Naive thymus-derived CD4-positive, alpha-beta T cell (primary cell): ENCODE measurements at regions of chr9 and their contacts with region 1.

Region 1: GRCh38 chr9:97921959-97922724 is at the start of gene TRMO:
- DNase-seq: peak; percentile 98 to 99 (median 98)
- ATAC-seq: peak; percentile 85
- H3K4me3 ChIP-seq: peak within 1 kb of the TSS; percentile 88
- H3K4me3 Mint-ChIP-seq: peak within 1 kb of the TSS; percentile 83 to 97 (median 94)
- H3K27ac ChIP-seq: peak within 1 kb of the TSS; percentile 98
- H3K27ac Mint-ChIP-seq: peak within 1 kb of the TSS; percentile 97 to 100 (median 99)
- H3K4me1 ChIP-seq: peaks cover 36 to 38% of the 10 kb centered on the region in 2 donors
- H3K4me1 Mint-ChIP-seq: peaks cover 26 to 66% (median 47%) of the 10 kb centered on the region in 7 donors
- H3K27me3 ChIP-seq: no peaks in the 10 kb centered on the region
- H3K27me3 Mint-ChIP-seq: peaks cover 0 to 5% (median 0%) of the 10 kb centered on the region in 5 donors
- total RNA-seq, gene TRMO: 26.8 to 55.3 (median 43.8) TPM

Region 2: GRCh38 chr9:97696803-97697601 is 225.1 kb before region 1 on chr9 and contains the start of gene XPA:
- CTCF ChIA-PET with region 1: interaction called, 3 read pairs
- POLR2A ChIA-PET with region 1: interaction called, 27 read pairs
- intact Hi-C with region 1: loop called (anchors 1 kb)
- DNase-seq: peak; percentile 95 to 98 (median 96)
- ATAC-seq: peak; percentile 97
- H3K4me3 ChIP-seq: peak within 1 kb of the TSS; percentile 68
- H3K4me3 Mint-ChIP-seq: peak within 1 kb of the TSS; percentile 87 to 96 (median 90)
- H3K27ac ChIP-seq: peak within 1 kb of the TSS; percentile 85
- H3K27ac Mint-ChIP-seq: peak within 1 kb of the TSS; percentile 85 to 98 (median 93)
- H3K4me1 ChIP-seq: peaks cover 32 to 38% of the 10 kb centered on the region in 2 donors
- H3K4me1 Mint-ChIP-seq: peaks cover 53 to 70% (median 65%) of the 10 kb centered on the region in 7 donors
- H3K27me3 ChIP-seq: no peaks in the 10 kb centered on the region
- H3K27me3 Mint-ChIP-seq: peaks cover 0 to 8% (median 0%) of the 10 kb centered on the region in 5 donors
- total RNA-seq, gene XPA: 16.7 to 30.3 (median 23.2) TPM

Region 3: DNA sequence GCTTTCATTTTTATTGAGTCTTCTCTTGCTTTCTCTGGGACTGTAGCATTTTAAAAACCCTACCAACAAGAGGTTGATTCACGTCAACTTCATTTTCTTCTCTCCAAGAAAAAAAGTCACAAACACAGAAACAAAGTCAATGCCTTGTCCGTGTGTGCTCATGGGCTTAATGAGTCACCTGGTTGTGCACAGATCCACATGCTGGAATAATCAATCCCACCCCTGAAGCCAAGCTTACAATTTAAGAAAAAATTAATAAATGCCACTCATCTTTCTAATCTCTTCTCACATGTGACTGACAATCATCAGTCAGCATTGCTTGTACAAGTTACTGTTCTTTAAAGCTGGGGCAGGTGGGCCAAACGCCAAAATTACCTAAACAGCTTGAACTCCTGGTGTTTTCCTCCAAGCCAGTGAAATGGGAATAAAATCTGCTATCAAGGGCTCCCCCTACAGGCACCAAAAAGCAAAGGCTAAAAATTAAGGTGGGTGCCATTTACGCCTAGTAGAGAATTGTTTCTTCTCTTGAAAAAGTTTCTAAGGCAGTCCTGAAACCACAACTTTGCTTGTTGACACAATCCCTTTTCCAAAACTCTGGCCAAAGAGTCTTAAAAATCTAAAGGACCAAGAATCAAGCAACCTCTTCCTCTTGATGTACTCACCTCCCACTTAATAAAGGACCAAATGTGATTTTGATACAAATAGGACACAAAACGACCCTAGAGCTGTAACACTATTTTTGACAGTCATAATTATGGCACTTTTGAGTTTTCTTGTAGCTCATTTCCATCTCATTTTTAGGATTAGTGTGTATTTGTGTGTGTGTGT is 21.2 kb before region 1 on chr9:
- CTCF ChIA-PET with region 1: interaction called, 85 read pairs
- POLR2A ChIA-PET with region 1: interaction called, 715 read pairs
- intact Hi-C with region 1: loop called (anchors 1 kb)
- DNase-seq: peak in 4 of 9 donors; percentile 27 to 43 (median 40)
- ATAC-seq: peak; percentile 36
- H3K4me3 ChIP-seq: no peak overlapping the region
- H3K4me3 Mint-ChIP-seq: peak overlapping the region in 8 of 10 donors; percentile 3 to 74 (median 32)
- H3K27ac ChIP-seq: peak overlapping the region; percentile 52
- H3K27ac Mint-ChIP-seq: peak overlapping the region in 8 of 9 donors; percentile 81 to 99 (median 94)
- H3K4me1 ChIP-seq: peaks cover 45 to 55% of the 10 kb centered on the region in 2 donors
- H3K4me1 Mint-ChIP-seq: peaks cover 39 to 73% (median 69%) of the 10 kb centered on the region in 7 donors
- H3K27me3 ChIP-seq: no peaks in the 10 kb centered on the region
- H3K27me3 Mint-ChIP-seq: no peaks in the 10 kb centered on the region

Region 4: GRCh38 chr9:97966493-97966892 is 44.4 kb after region 1 on chr9:
- CTCF ChIA-PET with region 1: interaction called, 11 read pairs
- POLR2A ChIA-PET with region 1: interaction called, 7 read pairs
- intact Hi-C with region 1: no loop called
- DNase-seq: no peak
- ATAC-seq: no peak
- H3K4me3 ChIP-seq: no peak overlapping the region
- H3K4me3 Mint-ChIP-seq: no peak overlapping the region
- H3K27ac ChIP-seq: no peak overlapping the region
- H3K27ac Mint-ChIP-seq: peak overlapping the region in 1 of 9 donors; percentile 68
- H3K4me1 ChIP-seq: peaks cover 0 to 3% of the 10 kb centered on the region in 2 donors
- H3K4me1 Mint-ChIP-seq: peaks cover 4 to 16% (median 14%) of the 10 kb centered on the region in 7 donors
- H3K27me3 ChIP-seq: no peaks in the 10 kb centered on the region
- H3K27me3 Mint-ChIP-seq: peaks cover 0 to 15% (median 6%) of the 10 kb centered on the region in 5 donors

Region 5: DNA sequence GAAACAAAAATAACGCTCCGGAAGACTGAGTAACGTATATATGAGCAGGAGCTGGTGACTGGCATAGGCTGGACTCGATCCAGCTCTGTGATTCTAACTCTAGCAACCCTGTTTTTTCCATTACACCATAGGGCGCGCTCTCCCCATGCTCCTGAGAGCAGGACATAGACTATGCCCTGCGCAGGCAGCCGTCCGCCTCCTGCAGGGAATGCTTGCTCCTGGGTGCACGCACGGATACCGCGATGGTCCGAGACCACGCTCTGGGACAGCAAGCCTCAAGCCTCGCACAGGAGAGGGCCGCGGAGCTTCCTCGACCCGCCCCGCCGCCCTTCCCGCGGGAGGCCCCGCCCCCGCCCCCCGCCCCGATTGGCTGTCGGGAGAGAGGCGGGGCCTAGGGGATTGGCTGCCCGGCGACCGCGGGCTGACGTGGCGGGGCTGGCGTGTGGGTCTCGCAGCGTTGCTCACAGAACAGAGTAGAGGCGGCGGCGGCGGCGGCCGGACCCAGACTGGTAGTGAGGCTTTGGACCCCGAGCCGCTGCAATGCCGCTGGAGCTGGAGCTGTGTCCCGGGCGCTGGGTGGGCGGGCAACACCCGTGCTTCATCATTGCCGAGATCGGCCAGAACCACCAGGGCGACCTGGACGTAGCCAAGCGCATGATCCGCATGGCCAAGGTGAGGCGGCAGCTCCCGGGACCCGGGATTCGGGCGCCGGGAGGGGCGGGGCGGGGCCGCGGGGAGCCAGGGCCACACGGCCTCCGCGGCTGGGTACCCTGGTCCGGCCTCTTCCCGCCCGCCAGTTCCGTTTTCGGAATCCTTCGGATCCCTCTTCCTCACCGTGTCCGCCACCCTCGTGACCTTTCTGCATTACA is 134.4 kb after region 1 on chr9 and contains the start of gene NANS:
- CTCF ChIA-PET with region 1: interaction called, 3 read pairs
- POLR2A ChIA-PET with region 1: interaction called, 20 read pairs
- intact Hi-C with region 1: loop called (anchors 1 kb)
- DNase-seq: peak; percentile 84 to 93 (median 91)
- ATAC-seq: peak; percentile 99
- H3K4me3 ChIP-seq: peak within 1 kb of the TSS; percentile 73
- H3K4me3 Mint-ChIP-seq: peak within 1 kb of the TSS; percentile 93 to 100 (median 95)
- H3K27ac ChIP-seq: peak within 1 kb of the TSS; percentile 93
- H3K27ac Mint-ChIP-seq: peak within 1 kb of the TSS; percentile 93 to 100 (median 97)
- H3K4me1 ChIP-seq: peaks cover 9 to 22% of the 10 kb centered on the region in 2 donors
- H3K4me1 Mint-ChIP-seq: peaks cover 6 to 40% (median 27%) of the 10 kb centered on the region in 7 donors
- H3K27me3 ChIP-seq: no peaks in the 10 kb centered on the region
- H3K27me3 Mint-ChIP-seq: no peaks in the 10 kb centered on the region
- total RNA-seq, gene NANS: 16.3 to 58.9 (median 51.8) TPM

Region 6: DNA sequence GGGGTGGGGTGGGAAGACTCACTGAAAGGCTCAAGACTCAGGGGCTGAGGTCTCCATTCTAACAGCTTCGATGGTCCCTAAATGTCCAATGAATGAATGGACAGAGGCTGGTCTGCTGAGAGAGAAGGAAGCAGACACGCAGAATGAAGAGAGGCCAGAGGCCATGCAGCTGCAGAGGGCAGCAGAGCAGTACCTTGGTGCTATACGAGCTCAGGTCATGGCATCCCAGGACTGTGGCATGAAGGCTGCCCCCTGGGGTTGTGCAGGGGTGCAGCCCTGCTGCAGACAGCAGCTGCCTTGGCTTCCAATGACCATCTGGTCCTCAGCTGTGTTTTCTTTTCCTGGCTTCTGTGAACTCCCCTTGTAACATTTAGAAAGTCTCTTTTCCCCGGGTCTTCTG is 285.5 kb after region 1 on chr9:
- CTCF ChIA-PET with region 1: no interaction called
- POLR2A ChIA-PET with region 1: no interaction called
- intact Hi-C with region 1: loop called in 1 of 2 experiments (anchors 5 kb)
- DNase-seq: no peak
- ATAC-seq: no peak
- H3K4me3 ChIP-seq: no peak overlapping the region
- H3K4me3 Mint-ChIP-seq: no peak overlapping the region
- H3K27ac ChIP-seq: no peak overlapping the region
- H3K27ac Mint-ChIP-seq: peak overlapping the region in 1 of 9 donors; percentile 28
- H3K4me1 ChIP-seq: no peaks in the 10 kb centered on the region
- H3K4me1 Mint-ChIP-seq: peaks cover 3 to 7% (median 6%) of the 10 kb centered on the region in 7 donors
- H3K27me3 ChIP-seq: no peaks in the 10 kb centered on the region
- H3K27me3 Mint-ChIP-seq: no peaks in the 10 kb centered on the region

Region 7: GRCh38 chr9:98614941-98615340 is 692.8 kb after region 1 on chr9:
- CTCF ChIA-PET with region 1: no interaction called
- POLR2A ChIA-PET with region 1: no interaction called
- intact Hi-C with region 1: no loop called
- DNase-seq: no peak
- ATAC-seq: no peak
- H3K4me3 ChIP-seq: no peak overlapping the region
- H3K4me3 Mint-ChIP-seq: no peak overlapping the region
- H3K27ac ChIP-seq: no peak overlapping the region
- H3K27ac Mint-ChIP-seq: no peak overlapping the region
- H3K4me1 ChIP-seq: no peaks in the 10 kb centered on the region
- H3K4me1 Mint-ChIP-seq: no peaks in the 10 kb centered on the region
- H3K27me3 ChIP-seq: no peaks in the 10 kb centered on the region
- H3K27me3 Mint-ChIP-seq: peaks cover 9 to 28% (median 17%) of the 10 kb centered on the region in 5 donors